ENCODE measurements at regions of chr13 and their contacts with region 1.

Region 1: GRCh38 chr13:79679334-79679733 is 198.4 kb downstream of the NDFIP2 start:
- DNase-seq: no peak
- ATAC-seq: peak; percentile 87
- H3K4me3 ChIP-seq: no peak overlapping the region
- H3K27ac ChIP-seq: no peak overlapping the region
- H3K4me1 ChIP-seq: no peaks in the 10 kb centered on the region
- H3K27me3 ChIP-seq: no peaks in the 10 kb centered on the region
- CTCF ChIP-seq: peak; percentile 70 to 90 (median 83)
- EP300 ChIP-seq: no peak
- POLR2A ChIP-seq: no peak
- RAD21 ChIP-seq: peak; percentile 88

Region 2: DNA sequence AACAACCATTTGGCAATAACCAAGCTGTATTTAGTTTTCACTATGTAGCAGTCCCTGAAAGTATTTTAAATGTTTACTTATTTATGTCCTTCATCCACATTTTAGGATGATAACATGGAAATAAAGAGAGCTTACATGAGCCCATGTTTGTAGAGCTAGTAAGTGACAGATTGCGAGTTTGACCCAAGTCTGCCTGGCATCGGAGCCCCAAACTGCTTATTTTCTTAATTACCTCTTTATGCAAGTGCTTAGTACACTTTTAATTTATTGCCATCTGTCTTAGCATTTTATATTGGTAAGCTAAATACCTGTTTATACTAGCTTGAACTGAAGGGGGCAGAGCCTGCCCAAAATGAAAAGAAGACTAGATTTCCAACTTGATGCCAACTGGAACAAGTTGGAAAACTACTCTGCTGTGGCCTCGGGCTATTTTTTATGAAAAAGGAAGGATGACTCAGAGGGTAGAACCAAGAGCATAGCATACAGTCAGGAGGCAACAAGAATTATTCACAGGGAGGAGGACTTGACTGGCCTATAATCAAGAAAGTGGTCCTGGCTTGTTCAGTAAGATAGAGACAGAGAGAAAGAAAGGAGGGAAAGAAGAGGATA is 48.2 kb before region 1 on chr13:
- CTCF ChIA-PET with region 1: interaction called, 16 read pairs
- POLR2A ChIA-PET with region 1: interaction called, 5 read pairs
- RAD21 ChIA-PET with region 1: interaction called, 16 read pairs
- SMC1A ChIA-PET with region 1: interaction called, 11 read pairs
- in situ Hi-C with region 1: no loop called
- intact Hi-C with region 1: no loop called
- DNase-seq: no peak
- ATAC-seq: no peak
- H3K4me3 ChIP-seq: no peak overlapping the region
- H3K27ac ChIP-seq: no peak overlapping the region
- H3K4me1 ChIP-seq: no peaks in the 10 kb centered on the region
- H3K27me3 ChIP-seq: no peaks in the 10 kb centered on the region
- CTCF ChIP-seq: no peak
- EP300 ChIP-seq: no peak
- POLR2A ChIP-seq: no peak
- RAD21 ChIP-seq: no peak

Region 3: DNA sequence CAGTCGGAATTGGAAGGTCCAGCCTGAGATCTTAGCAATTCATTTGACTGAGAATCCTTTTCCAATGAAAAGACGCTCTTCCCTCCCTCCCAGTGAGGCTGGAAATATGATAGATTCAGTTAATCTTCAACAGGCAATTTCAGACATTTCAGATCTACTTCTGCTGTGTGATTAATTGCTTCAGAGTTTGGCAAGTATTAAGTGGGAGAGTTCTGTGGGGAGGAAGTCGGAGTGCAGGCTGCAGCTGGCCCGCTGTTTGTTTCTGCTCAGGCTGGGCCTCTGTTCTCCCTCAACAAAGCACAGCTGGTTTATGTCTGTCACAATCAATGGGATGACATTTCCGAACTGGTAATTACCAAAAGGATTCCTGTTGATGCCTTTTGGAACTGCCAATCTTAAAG is 20.2 kb before region 1 on chr13:
- CTCF ChIA-PET with region 1: interaction called, 38 read pairs
- POLR2A ChIA-PET with region 1: interaction called, 4 read pairs
- RAD21 ChIA-PET with region 1: interaction called, 16 read pairs
- SMC1A ChIA-PET with region 1: interaction called, 22 read pairs
- in situ Hi-C with region 1: no loop called
- intact Hi-C with region 1: no loop called
- DNase-seq: no peak
- ATAC-seq: peak; percentile 22; the same call in 1 of the 3 replicates
- H3K4me3 ChIP-seq: no peak overlapping the region
- H3K27ac ChIP-seq: no peak overlapping the region
- H3K4me1 ChIP-seq: no peaks in the 10 kb centered on the region
- H3K27me3 ChIP-seq: no peaks in the 10 kb centered on the region
- CTCF ChIP-seq: no peak
- EP300 ChIP-seq: no peak
- POLR2A ChIP-seq: no peak
- RAD21 ChIP-seq: no peak

Region 4: DNA sequence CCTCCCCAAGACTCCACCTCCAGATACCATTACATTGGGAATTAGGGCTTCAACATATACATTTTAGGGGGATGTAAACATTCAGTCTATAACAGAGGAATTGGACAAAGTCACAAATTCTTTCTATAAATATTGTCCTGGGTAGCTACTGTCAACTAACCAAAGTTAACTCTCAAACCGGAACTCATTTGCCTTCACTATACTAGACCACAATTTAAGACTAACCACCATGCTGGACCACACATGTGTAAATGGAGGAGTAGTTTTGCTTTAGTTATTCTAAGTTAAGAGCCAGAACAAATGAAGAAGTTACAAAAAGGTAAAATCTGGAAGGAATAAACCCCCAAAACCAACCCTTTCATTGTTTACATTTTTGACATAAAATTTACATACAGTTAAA is 24.4 kb after region 1 on chr13:
- CTCF ChIA-PET with region 1: interaction called, 11 read pairs
- POLR2A ChIA-PET with region 1: no interaction called
- RAD21 ChIA-PET with region 1: interaction called, 6 read pairs
- SMC1A ChIA-PET with region 1: interaction called, 4 read pairs
- in situ Hi-C with region 1: no loop called
- intact Hi-C with region 1: no loop called
- DNase-seq: no peak
- ATAC-seq: peak; percentile 91
- H3K4me3 ChIP-seq: no peak overlapping the region
- H3K27ac ChIP-seq: no peak overlapping the region
- H3K4me1 ChIP-seq: no peaks in the 10 kb centered on the region
- H3K27me3 ChIP-seq: no peaks in the 10 kb centered on the region
- CTCF ChIP-seq: no peak
- EP300 ChIP-seq: no peak
- POLR2A ChIP-seq: no peak
- RAD21 ChIP-seq: no peak

Region 5: DNA sequence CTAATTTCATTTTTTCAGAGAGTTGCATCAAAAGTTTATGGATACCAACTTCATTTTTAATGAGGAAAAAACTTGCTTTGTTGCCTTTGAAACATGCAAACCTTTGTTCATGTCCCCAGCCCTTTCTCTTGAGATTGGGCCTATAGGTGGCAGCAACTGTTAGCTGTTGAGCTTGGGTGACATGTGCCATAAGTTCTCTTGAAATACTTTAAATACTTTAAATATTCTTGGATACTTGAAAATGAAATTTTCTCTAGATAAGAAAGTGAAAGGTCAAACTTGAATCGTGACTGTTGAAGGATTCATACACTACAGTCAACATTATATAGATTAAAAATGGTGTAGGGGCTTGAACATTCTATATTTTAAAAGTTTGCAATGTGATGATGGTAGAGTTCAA is 96.5 kb after region 1 on chr13:
- CTCF ChIA-PET with region 1: interaction called, 22 read pairs
- POLR2A ChIA-PET with region 1: interaction called, 3 read pairs
- RAD21 ChIA-PET with region 1: interaction called, 11 read pairs
- SMC1A ChIA-PET with region 1: interaction called, 12 read pairs
- in situ Hi-C with region 1: no loop called
- intact Hi-C with region 1: no loop called
- DNase-seq: no peak
- ATAC-seq: peak; percentile 86
- H3K4me3 ChIP-seq: no peak overlapping the region
- H3K27ac ChIP-seq: no peak overlapping the region
- H3K4me1 ChIP-seq: no peaks in the 10 kb centered on the region
- H3K27me3 ChIP-seq: no peaks in the 10 kb centered on the region
- CTCF ChIP-seq: peak; percentile 60 to 78 (median 65)
- EP300 ChIP-seq: no peak
- POLR2A ChIP-seq: no peak
- RAD21 ChIP-seq: peak; percentile 94

Region 6: DNA sequence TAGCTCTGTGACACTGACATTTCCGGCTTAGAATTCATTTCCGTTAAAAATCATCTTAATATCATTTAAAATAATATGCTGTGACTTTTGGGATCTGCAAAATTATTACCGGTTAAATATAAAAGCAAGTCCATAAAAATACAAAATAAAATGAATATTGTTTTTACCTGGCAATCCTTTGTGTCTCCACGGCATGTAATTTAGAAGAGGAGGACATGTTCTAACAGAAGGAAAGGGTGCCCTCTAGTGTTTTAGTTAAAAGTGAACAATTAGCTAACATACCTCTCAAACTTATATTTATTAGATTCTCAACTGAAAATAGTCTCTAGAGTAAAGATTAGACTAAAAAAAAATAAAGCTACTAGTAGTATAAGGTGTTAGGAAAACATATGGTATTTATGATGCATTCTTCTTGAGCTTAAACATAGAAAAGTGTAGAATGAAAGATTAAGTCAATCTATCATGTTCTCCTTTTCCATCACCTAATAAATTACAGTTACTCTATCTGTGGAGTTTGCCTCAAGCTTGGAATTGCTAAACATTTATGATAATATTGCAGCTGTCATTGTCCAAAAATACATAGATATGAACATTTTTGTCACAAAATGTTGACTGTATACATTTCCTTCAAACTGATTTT is 1338.3 kb after region 1 on chr13:
- CTCF ChIA-PET with region 1: interaction called, 39 read pairs
- POLR2A ChIA-PET with region 1: no interaction called
- RAD21 ChIA-PET with region 1: interaction called, 33 read pairs
- SMC1A ChIA-PET with region 1: interaction called, 26 read pairs
- in situ Hi-C with region 1: loop called (anchors 5 kb)
- intact Hi-C with region 1: loop called (anchors 5 kb)
- DNase-seq: no peak
- ATAC-seq: peak; percentile 88
- H3K4me3 ChIP-seq: no peak overlapping the region
- H3K27ac ChIP-seq: no peak overlapping the region
- H3K4me1 ChIP-seq: no peaks in the 10 kb centered on the region
- H3K27me3 ChIP-seq: no peaks in the 10 kb centered on the region
- CTCF ChIP-seq: peak; percentile 38 to 54 (median 39); a peak in 3 of 6 replicates
- EP300 ChIP-seq: no peak
- POLR2A ChIP-seq: no peak
- RAD21 ChIP-seq: peak; percentile 72

Measured in GM12878 (cell line).